ENCODE measurements at regions of chr9 and their contacts with region 1.

Region 1: DNA sequence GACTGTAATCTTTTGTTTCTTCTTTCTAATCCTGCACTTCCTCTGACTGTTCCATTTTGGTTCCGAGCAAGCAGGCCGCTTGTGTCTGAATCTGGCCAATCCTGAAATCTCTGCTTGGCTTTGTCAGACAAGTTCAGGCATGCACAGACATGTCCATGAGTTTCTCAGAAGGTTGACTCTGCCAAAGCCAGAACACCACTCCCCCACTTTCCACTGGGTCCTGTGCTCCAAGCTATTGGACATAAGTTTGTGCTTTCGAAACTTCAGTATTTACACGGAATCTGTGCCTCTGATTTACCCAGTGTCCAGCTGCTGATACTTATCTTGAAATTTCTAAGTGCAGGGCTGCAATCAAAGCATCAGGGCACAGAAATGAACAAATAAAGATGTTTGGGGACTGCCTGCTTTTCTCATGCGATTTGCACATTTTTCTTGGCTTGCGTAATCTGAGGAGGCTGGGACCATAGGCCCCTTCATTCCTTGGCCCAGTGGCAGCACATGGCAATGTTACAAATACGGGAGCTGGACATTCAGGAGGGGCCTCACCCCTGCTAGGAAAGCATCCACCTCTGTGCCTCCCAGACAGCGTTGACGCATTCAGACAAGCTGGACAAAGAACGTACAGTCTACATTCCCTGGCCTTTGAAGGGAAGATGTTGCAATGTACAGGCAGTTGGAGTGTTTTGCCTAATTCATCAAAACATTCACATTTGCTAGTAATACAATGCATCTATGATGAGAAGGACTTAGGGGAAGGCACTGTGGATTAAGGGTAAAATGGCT is 209.2 kb upstream of the PAPPA start:
- DNase-seq: peak; percentile 88 to 94 (median 90)
- ATAC-seq: peak; percentile 97
- H3K4me3 ChIP-seq: no peak overlapping the region
- H3K27ac ChIP-seq: peak overlapping the region; percentile 61
- H3K4me1 ChIP-seq: peaks cover 2% of the 10 kb centered on the region
- H3K27me3 ChIP-seq: no peaks in the 10 kb centered on the region

Region 2: DNA sequence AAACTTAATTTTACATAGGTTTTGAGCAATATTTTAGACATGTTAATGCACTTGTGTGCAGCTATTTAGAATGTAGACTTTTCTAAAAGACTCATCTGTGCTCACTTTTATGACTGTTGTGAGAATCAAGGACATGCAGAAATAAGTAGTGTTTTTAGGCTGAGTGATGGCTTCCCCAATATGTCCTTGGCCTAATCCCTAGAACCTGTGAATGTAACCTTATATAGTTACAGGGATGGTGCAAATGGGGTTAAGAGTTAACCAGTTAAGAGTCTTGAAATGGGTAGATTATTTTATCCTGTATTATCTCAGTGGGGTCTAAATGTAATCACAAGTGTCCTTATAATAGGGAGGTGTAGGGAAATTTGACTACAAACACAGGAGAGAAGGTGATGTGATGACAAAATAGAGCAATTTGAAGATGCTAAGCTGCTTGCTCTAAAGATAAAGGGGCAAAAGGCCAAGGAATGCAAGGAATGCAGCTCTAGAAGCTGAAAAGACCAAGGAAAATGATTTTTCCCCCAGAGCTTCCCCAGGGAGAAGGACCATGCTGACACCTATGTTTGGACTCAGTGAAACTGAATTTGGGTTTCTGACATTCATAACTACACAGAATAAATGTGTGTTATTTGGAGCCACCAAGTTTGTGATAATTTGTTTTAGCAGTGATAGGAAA is 88.8 kb before region 1 on chr9:
- intact Hi-C with region 1: no loop called
- DNase-seq: no peak
- ATAC-seq: no peak
- H3K4me3 ChIP-seq: no peak overlapping the region
- H3K27ac ChIP-seq: no peak overlapping the region
- H3K4me1 ChIP-seq: no peaks in the 10 kb centered on the region
- H3K27me3 ChIP-seq: no peaks in the 10 kb centered on the region

Region 3: GRCh38 chr9:116464987-116465571 is 520.7 kb after region 1 on chr9:
- intact Hi-C with region 1: loop called in 1 of 4 experiments (anchors 10 kb)
- DNase-seq: peak in 2 of 3 donors; percentile 37 to 58
- ATAC-seq: peak; percentile 35 to 87
- H3K4me3 ChIP-seq: no peak overlapping the region
- H3K27ac ChIP-seq: no peak overlapping the region
- H3K4me1 ChIP-seq: no peaks in the 10 kb centered on the region
- H3K27me3 ChIP-seq: no peaks in the 10 kb centered on the region

Region 4: DNA sequence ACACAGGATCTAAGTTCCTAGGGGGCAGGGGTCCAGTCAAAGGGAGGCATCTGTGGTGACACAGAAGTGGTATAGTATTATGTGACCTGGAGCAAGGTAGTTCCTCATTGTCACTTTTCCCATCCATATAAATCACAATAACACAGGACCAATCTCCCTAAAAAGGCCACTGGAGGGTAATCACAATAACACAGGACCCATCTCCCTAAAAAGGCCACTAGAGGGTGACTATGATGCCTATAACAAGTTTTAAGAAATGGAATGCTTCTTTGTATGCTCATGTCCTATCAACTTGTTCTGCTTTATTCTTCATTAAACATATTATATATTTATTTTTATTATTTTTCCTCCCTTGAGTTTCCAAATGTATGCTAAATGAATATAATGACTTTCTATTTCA is 1215.9 kb after region 1 on chr9:
- intact Hi-C with region 1: no loop called
- DNase-seq: no peak
- ATAC-seq: no peak
- H3K4me3 ChIP-seq: no peak overlapping the region
- H3K27ac ChIP-seq: no peak overlapping the region
- H3K4me1 ChIP-seq: no peaks in the 10 kb centered on the region
- H3K27me3 ChIP-seq: no peaks in the 10 kb centered on the region

Measured in right cardiac atrium (tissue), 5 donors.